ENCODE measurements at regions of chr16 and their contacts with region 1.

Region 1: DNA sequence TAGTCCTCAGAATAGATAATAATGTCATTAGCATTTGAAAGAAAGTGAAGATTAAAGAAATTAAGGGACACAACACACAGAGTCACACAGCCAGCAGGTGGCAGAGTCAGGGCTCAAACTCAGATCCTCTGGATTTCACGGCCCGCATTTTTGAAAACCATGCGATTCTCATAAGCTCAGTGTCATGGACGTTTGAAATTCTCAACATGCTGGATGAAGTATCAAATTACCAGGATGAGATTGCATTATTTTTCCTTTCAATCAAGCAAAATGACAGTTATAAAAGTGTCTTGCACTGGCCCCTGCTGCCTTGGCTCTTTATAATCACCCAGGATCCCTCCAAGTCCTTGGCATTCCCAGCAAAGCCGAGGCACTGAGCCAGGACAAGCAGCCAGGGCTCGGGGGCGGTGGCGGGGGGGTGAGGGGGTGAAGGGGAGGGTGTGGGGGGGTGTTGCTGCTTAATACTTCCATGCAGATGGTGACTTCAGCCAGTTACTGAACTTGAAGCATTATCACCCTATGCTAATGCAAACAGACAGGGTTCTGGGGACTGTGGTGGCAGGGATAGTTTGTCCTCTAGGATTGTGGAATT is 6.6 kb upstream of the BMERB1 start:
- DNase-seq: peak; percentile 78
- ATAC-seq: peak; percentile 74
- H3K4me3 Mint-ChIP-seq: no peak overlapping the region
- H3K27ac Mint-ChIP-seq: no peak overlapping the region
- H3K4me1 Mint-ChIP-seq: peaks cover 2% of the 10 kb centered on the region
- H3K27me3 Mint-ChIP-seq: peaks cover 3% of the 10 kb centered on the region

Region 2: DNA sequence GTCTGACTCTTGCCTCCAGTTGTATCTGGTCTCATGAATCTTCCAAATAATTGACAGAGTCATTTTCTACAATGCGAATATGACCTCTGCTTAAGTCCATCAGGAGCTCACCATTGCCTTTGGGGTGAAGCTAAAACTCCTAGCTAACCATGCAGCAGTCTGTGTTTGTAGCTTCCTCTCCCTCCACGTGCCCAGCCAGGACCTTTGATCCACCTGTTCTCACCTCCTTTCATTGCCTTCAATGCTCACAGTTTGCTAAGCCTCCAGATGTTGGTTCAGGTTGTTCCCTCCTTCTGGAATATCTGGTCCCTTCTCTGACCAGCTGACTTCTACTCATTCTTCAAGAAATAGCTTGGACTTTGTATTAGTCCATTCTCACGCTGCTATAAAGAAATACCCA is 29.7 kb after region 1 on chr16:
- CTCF ChIA-PET with region 1: no interaction called
- POLR2A ChIA-PET with region 1: no interaction called
- intact Hi-C with region 1: no loop called
- DNase-seq: no peak
- ATAC-seq: no peak
- H3K4me3 Mint-ChIP-seq: no peak overlapping the region
- H3K27ac Mint-ChIP-seq: no peak overlapping the region
- H3K4me1 Mint-ChIP-seq: no peaks in the 10 kb centered on the region
- H3K27me3 Mint-ChIP-seq: peaks cover 9% of the 10 kb centered on the region

Region 3: GRCh38 chr16:15548482-15548891 is 120.7 kb after region 1 on chr16:
- CTCF ChIA-PET with region 1: interaction called, 8 read pairs
- POLR2A ChIA-PET with region 1: no interaction called
- intact Hi-C with region 1: loop called in 1 of 2 experiments (anchors 1 kb)
- DNase-seq: no peak
- ATAC-seq: no peak
- H3K4me3 Mint-ChIP-seq: no peak overlapping the region
- H3K27ac Mint-ChIP-seq: no peak overlapping the region
- H3K4me1 Mint-ChIP-seq: peaks cover 27% of the 10 kb centered on the region
- H3K27me3 Mint-ChIP-seq: peaks cover 2% of the 10 kb centered on the region

Region 4: DNA sequence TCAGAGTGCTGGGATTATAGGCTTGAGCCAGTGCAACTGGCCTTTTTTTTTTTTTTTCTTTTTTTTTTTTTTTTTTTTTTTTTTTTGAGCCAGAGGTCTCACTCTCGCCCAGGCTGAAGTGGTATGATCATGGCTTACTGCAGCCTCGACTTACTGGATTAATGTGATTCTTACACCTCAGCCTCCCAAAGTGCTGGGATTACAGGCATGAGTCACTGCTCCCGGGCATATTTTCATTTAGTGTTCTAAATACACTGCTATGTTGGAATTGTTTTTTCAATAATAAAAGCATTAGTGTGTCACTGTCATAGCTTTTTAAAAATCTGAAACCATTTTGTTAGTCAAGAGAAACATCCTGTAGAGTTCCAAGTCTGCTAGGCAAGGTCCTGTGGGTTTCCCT is 262.6 kb after region 1 on chr16:
- CTCF ChIA-PET with region 1: no interaction called
- POLR2A ChIA-PET with region 1: no interaction called
- intact Hi-C with region 1: no loop called
- DNase-seq: no peak
- ATAC-seq: no peak
- H3K4me3 Mint-ChIP-seq: no peak overlapping the region
- H3K27ac Mint-ChIP-seq: no peak overlapping the region
- H3K4me1 Mint-ChIP-seq: no peaks in the 10 kb centered on the region
- H3K27me3 Mint-ChIP-seq: no peaks in the 10 kb centered on the region

Region 5: DNA sequence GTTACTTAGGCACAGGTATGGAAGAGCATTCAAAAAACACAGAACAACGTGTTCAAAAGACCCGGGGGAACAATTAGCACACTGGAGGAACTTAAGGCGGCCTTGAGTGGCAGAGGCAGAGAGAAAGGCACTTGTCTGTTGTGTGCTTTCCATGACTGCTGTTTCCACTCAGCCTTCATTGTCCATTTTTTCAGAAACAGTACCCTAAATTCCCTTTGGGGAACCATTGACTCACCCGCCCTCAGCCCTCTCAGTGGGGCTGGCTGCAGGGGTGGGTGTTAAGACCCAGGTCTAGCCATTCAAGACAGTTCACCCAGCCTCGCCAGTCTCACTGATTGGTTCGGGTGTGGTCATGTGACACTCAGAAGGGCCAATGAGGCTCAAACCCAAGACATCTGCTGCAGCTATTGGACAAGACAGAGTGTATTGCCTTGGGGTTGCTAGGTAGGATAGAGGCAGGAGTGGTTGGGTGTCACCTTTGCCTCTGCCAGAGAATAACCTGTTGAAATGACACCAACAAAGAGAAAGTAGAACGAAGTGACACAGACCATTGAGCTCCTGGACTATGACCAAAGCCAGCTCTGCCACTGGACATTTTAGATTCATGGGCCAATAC is 480.2 kb after region 1 on chr16:
- CTCF ChIA-PET with region 1: no interaction called
- POLR2A ChIA-PET with region 1: no interaction called
- intact Hi-C with region 1: no loop called
- DNase-seq: peak; percentile 50
- ATAC-seq: peak; percentile 96
- H3K4me3 Mint-ChIP-seq: no peak overlapping the region
- H3K27ac Mint-ChIP-seq: no peak overlapping the region
- H3K4me1 Mint-ChIP-seq: peaks cover 10% of the 10 kb centered on the region
- H3K27me3 Mint-ChIP-seq: no peaks in the 10 kb centered on the region